Prostate gland (tissue), 2 donors: ENCODE measurements at regions of chr1 and their contacts with region 1.

Region 1: DNA sequence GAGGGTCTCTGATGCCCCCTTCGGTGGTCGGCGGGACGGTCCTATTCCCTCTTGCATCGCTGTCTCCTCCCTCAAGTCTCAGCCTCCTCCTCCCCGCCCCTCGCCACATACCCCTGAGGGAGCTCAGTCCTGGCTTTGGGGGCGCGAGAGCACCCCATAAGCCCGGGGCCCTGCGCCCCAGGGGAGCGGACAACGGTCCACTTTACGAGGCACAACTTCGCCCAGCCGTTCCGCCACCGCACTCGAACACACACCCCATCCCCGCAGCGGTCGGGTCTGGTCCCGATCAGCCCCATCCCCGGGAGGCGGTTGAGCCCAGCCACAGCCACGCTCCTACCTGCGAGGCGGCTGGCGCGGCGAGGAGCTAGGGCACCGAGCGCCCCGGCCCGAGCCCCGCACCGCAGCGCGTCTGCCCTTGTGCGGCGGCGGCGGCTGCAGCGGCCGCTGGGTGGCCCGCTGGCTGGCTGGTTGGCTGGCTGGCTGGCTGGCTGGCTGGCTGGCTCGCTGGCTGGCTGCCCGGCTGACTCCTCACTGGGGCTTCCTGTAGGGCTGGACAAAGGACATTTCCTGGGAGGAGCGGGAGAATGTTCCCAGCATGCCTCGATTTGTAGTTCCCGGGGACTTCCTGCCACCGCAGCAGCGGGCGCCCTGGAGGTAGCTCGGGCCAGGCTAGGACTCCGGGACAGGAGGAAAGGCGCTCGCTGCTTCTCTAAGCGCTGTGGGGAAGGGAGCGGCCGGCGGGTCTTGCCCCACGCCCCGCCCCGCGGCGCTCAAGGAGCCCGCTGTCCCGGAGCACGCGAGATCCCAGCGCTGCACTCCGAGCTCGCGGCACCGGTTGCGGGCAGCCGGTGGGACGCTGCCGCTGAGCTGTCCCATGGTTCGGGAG is at the start of gene ZNF697:
- DNase-seq: peak; percentile 98
- H3K4me3 ChIP-seq: peak within 1 kb of the TSS; percentile 86 to 88
- H3K27ac ChIP-seq: peak within 1 kb of the TSS; percentile 91 to 93
- H3K4me1 ChIP-seq: no peaks in the 10 kb centered on the region
- H3K27me3 ChIP-seq: no peaks in the 10 kb centered on the region
- CTCF ChIP-seq: peak in 2 of 4 experiments; percentile 49 to 51
- POLR2A ChIP-seq: peak; percentile 66
- total RNA-seq, gene ZNF697: 17.4 to 25.6 TPM

Region 2: GRCh38 chr1:119140177-119141019 is 507.6 kb before region 1 on chr1 and contains the start of gene WARS2:
- intact Hi-C with region 1: loop called (anchors 5 kb)
- DNase-seq: peak; percentile 97
- H3K4me3 ChIP-seq: peak within 1 kb of the TSS; percentile 48 to 59
- H3K27ac ChIP-seq: peak within 1 kb of the TSS; percentile 98 to 99
- H3K4me1 ChIP-seq: peaks cover 4% of the 10 kb centered on the region
- H3K27me3 ChIP-seq: no peaks in the 10 kb centered on the region
- CTCF ChIP-seq: peak in 1 of 4 experiments; percentile 25
- POLR2A ChIP-seq: peak; percentile 64
- total RNA-seq, gene WARS2: 15.6 to 22.0 TPM

Region 3: DNA sequence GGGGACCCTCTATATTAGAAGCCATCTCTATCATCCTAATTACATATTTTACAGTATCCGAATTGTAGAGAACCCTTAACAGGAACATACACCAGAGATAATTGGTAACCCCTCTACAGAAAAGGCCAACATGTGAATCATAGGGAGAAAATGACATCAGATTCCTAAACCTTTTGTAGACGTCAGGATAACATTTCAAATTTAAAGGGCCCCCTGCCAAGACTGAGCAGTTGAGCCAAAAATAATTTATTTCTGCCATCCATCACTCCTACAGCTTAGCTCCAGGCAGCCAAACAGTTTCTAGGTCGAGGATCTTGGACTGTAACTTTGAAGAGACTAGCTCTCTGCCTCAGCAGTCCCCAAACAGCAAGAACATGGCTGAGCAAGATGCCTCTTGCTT is 21.1 kb before region 1 on chr1:
- intact Hi-C with region 1: no loop called
- DNase-seq: no peak
- H3K4me3 ChIP-seq: no peak overlapping the region
- H3K27ac ChIP-seq: peak overlapping the region in 1 of 2 donors; percentile 70
- H3K4me1 ChIP-seq: peaks cover 13% of the 10 kb centered on the region
- H3K27me3 ChIP-seq: no peaks in the 10 kb centered on the region
- CTCF ChIP-seq: no peak
- POLR2A ChIP-seq: no peak

Region 4: GRCh38 chr1:119702384-119702783 is 54.4 kb after region 1 on chr1:
- intact Hi-C with region 1: no loop called
- DNase-seq: no peak
- H3K4me3 ChIP-seq: no peak overlapping the region
- H3K27ac ChIP-seq: no peak overlapping the region
- H3K4me1 ChIP-seq: no peaks in the 10 kb centered on the region
- H3K27me3 ChIP-seq: no peaks in the 10 kb centered on the region
- CTCF ChIP-seq: no peak
- POLR2A ChIP-seq: no peak